ENCODE measurements at regions of chr10 and their contacts with region 1.

Region 1: DNA sequence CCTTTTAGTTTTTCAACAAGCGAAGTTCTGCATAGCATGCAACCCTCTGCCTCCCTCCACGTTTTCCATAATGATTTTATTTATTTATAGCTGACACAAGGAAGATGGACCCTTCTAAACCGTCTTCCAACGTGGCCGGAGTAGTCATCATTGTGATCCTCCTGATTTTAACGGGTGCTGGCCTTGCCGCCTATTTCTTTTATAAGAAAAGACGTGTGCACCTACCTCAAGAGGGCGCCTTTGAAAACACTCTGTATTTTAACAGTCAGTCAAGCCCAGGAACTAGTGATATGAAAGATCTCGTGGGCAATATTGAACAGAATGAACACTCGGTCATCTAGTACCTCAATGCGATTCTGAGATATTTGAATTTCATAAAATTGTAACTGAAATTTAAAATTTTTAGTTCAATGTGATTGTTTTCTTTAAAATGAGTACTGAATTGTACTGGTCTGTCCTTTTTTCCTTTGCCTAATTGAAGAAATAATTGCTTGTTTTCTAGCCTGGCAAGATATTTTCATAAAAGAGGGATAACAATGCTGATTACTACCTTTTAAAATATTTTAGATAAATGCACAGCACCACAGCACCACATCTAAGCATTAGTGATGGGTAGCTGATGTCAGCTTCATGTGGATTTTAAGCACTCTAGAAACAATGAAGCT is 41.5 kb upstream of the SLC39A12 start:
- DNase-seq: peak; percentile 80
- H3K4me3 ChIP-seq: no peak overlapping the region
- H3K27ac ChIP-seq: no peak overlapping the region
- H3K4me1 ChIP-seq: peaks cover 7% of the 10 kb centered on the region
- H3K27me3 ChIP-seq: no peaks in the 10 kb centered on the region

Region 2: GRCh38 chr10:17062955-17063484 is 847.2 kb before region 1 on chr10:
- in situ Hi-C with region 1: no loop called
- DNase-seq: peak; percentile 95
- H3K4me3 ChIP-seq: peak overlapping the region; percentile 55
- H3K27ac ChIP-seq: peak overlapping the region; percentile 97
- H3K4me1 ChIP-seq: peaks cover 76% of the 10 kb centered on the region
- H3K27me3 ChIP-seq: no peaks in the 10 kb centered on the region

Region 3: GRCh38 chr10:18104223-18104872 is 194.1 kb after region 1 on chr10:
- in situ Hi-C with region 1: loop called (anchors 10 kb)
- DNase-seq: peak; percentile 58
- H3K4me3 ChIP-seq: no peak overlapping the region
- H3K27ac ChIP-seq: no peak overlapping the region
- H3K4me1 ChIP-seq: no peaks in the 10 kb centered on the region
- H3K27me3 ChIP-seq: no peaks in the 10 kb centered on the region